ENCODE measurements at regions of chr3 and their contacts with region 1.

Region 1: GRCh38 chr3:129831503-129831902 is 62.0 kb downstream of the TMCC1 start:
- DNase-seq: no peak
- H3K4me3 ChIP-seq: no peak overlapping the region
- H3K27ac ChIP-seq: peak overlapping the region; percentile 80
- H3K4me1 ChIP-seq: peaks cover 40% of the 10 kb centered on the region
- H3K27me3 ChIP-seq: no peaks in the 10 kb centered on the region
- CTCF ChIP-seq: no peak

Region 2: DNA sequence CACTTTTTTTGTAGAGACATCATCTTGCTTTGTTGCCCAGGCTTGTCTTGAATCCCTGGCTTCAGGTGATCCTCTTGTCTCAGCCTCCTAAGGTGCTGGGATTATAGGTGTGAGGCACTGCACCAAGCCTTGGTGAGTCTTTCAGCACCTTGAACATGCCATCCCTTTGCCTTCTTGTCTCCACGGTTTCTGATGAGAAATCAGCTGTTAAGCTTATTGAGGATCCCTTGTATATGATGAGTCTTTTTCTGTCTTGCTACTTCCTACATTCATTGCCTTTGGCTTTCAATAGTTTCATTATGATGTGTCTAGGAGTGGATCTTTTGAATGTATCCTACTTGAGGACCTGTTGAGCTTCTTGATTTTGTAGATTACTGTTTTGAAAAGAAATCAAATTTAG is 97.9 kb after region 1 on chr3:
- CTCF ChIA-PET with region 1: interaction called, 3 read pairs
- POLR2A ChIA-PET with region 1: interaction called, 11 read pairs
- intact Hi-C with region 1: loop called (anchors 1 kb)
- DNase-seq: no peak
- H3K4me3 ChIP-seq: no peak overlapping the region
- H3K27ac ChIP-seq: no peak overlapping the region
- H3K4me1 ChIP-seq: no peaks in the 10 kb centered on the region
- H3K27me3 ChIP-seq: no peaks in the 10 kb centered on the region
- CTCF ChIP-seq: no peak

Measured in PC-9 (cell line).